ENCODE measurements at regions of chr20 and their contacts with region 1.

Region 1: DNA sequence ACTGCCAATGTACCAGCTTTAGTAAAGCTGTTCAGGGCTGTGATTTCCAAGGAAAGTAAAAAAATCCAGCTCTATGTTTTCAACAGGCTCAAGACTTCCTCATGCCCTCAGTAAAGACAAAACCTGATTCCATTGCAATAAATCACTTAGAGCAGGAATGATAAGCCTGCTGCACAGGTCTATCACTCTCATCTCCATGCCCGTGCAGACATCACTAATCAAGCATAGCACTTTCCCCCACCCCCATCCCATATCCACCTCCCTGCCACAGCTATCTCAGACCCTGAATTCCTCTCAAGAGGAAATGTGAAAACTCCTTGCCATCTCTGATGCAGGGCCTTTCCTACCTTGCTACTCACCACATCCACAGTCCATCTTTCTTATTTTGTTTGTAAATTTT is 554.9 kb downstream of the MAFB start:
- DNase-seq: no peak
- H3K4me3 ChIP-seq: no peak overlapping the region
- CTCF ChIP-seq: no peak

Region 2: GRCh38 chr20:40037511-40037910 is 96.7 kb before region 1 on chr20:
- in situ Hi-C with region 1: loop called (anchors 5 kb)
- DNase-seq: no peak
- H3K4me3 ChIP-seq: no peak overlapping the region
- CTCF ChIP-seq: no peak

Measured in astrocyte of the cerebellum (primary cell).